CD14-positive monocyte (primary cell): ENCODE measurements at regions of chr11 and their contacts with region 1.

Region 1: GRCh38 chr11:114128399-114128798 is 68.9 kb downstream of the ZBTB16 start:
- DNase-seq: no peak
- H3K4me3 ChIP-seq: no peak overlapping the region
- H3K4me3 Mint-ChIP-seq: no peak overlapping the region
- H3K27ac ChIP-seq: no peak overlapping the region
- H3K27ac Mint-ChIP-seq: no peak overlapping the region
- H3K4me1 ChIP-seq: peaks cover 11 to 15% of the 10 kb centered on the region in 2 donors
- H3K4me1 Mint-ChIP-seq: peaks cover 44% of the 10 kb centered on the region
- H3K27me3 ChIP-seq: no peaks in the 10 kb centered on the region
- H3K27me3 Mint-ChIP-seq: peaks cover 0 to 3% (median 0%) of the 10 kb centered on the region in 3 donors
- CTCF ChIP-seq: no peak

Region 2: DNA sequence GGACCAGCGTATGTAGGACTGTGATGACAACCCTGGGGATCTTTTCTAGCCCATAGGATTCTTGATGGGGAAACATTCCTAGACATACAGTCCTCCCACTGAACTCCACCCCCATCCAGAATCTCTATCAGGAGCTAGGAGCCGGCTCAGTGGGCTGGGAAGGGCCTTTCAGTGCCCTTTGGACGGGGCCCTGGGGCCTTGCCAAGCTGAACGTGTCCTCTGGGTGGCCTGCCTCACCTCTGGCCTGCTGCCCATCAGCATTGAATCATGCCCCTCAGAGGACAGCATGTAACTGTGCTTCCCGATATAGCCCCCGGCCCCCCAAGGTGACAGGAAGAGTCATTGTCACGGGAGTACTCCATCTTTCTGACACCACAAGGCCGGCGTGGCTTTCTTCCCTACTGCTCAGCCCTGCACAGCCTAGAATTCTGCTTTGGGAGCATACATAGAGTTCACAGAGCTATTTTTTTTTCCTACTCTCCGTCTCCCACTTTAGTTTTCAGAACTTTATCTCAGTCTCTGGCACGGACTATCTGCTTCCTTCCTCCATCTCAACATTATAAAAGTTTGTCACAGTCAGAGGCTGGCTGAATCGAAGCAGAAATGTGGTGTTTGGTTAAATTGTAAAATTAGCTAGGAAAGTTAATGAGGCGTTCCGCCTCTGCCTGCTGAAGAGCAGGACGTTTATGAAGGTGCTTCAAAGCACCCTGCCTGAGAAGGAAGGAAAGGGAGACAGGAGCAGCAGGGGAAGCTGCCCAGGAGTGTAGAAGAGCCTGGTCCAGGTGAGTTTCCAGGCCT is 43.1 kb after region 1 on chr11:
- intact Hi-C with region 1: loop called in 1 of 2 experiments (anchors 5 kb)
- DNase-seq: no peak
- H3K4me3 ChIP-seq: no peak overlapping the region
- H3K4me3 Mint-ChIP-seq: no peak overlapping the region
- H3K27ac ChIP-seq: no peak overlapping the region
- H3K27ac Mint-ChIP-seq: no peak overlapping the region
- H3K4me1 ChIP-seq: peaks cover 17 to 32% of the 10 kb centered on the region in 2 donors
- H3K4me1 Mint-ChIP-seq: peaks cover 52% of the 10 kb centered on the region
- H3K27me3 ChIP-seq: no peaks in the 10 kb centered on the region
- H3K27me3 Mint-ChIP-seq: peaks cover 5 to 11% (median 10%) of the 10 kb centered on the region in 3 donors
- CTCF ChIP-seq: no peak

Region 3: GRCh38 chr11:114192841-114193389 is 64.5 kb after region 1 on chr11:
- intact Hi-C with region 1: no loop called
- DNase-seq: no peak
- H3K4me3 ChIP-seq: no peak overlapping the region
- H3K4me3 Mint-ChIP-seq: no peak overlapping the region
- H3K27ac ChIP-seq: no peak overlapping the region
- H3K27ac Mint-ChIP-seq: peak overlapping the region in 3 of 7 donors; percentile 8 to 28 (median 23)
- H3K4me1 ChIP-seq: no peaks in the 10 kb centered on the region
- H3K4me1 Mint-ChIP-seq: peaks cover 4% of the 10 kb centered on the region
- H3K27me3 ChIP-seq: no peaks in the 10 kb centered on the region
- H3K27me3 Mint-ChIP-seq: no peaks in the 10 kb centered on the region
- CTCF ChIP-seq: no peak